ENCODE measurements at regions of chr17 and their contacts with region 1.

Region 1: DNA sequence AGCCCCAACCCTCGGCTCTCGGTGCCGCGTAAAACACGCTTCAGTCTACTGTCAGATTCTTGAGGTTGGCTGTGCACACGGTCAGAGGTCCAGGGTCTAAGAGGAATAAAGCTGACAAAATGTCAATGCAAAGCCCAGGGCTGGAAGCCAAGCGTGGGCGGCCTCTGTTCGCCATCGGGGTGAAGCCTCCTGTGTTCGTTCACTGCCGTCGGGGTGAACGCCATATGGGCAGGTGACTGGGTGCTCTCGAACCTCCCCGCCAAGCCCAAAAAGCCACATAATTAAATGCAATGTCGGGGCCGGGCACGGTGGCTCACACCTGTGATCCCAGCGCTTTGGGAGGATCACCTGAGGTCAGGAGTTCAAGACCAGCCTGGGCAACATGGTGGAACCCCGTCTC is 44.6 kb downstream of the MRM3 start:
- DNase-seq: no peak
- H3K4me3 ChIP-seq: no peak overlapping the region
- H3K27ac ChIP-seq: no peak overlapping the region
- H3K4me1 ChIP-seq: no peaks in the 10 kb centered on the region
- H3K27me3 ChIP-seq: no peaks in the 10 kb centered on the region
- CTCF ChIP-seq: no peak

Region 2: DNA sequence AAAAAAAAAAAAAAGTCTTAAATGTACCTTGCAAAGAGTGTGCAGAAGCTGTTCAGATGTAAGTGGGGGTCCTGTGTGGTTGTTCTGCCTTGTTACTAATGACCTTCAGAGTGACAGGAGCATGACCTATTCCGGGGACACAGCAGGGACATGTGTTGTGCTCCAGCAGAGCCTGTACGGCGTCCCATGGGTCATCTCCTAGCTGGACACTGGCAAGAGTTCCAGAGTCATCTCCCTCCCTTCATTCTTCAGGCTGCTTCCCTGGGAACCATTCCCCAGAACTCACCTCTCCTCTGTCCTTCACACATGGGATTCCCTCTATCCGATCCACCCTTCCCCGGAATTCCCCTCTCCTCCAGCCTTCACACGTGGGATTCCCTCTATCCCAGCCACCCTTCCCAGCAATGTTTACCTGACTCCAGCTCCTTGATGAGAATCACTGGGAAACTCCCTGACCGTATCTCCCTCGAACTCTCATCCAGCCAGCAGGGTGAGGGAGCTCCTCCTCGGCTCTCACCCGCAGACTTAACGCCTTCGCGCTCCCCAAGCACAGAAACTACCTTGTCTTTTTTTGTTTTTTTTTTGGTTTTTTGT is 41.2 kb after region 1 on chr17:
- intact Hi-C with region 1: loop called (anchors 2 kb)
- DNase-seq: no peak
- H3K4me3 ChIP-seq: no peak overlapping the region
- H3K27ac ChIP-seq: peak overlapping the region; percentile 81 to 87
- H3K4me1 ChIP-seq: peaks cover 0 to 59% (median 17%) of the 10 kb centered on the region in 4 donors
- H3K27me3 ChIP-seq: no peaks in the 10 kb centered on the region
- CTCF ChIP-seq: no peak